ENCODE measurements at regions of chr4 and their contacts with region 1.

Region 1: DNA sequence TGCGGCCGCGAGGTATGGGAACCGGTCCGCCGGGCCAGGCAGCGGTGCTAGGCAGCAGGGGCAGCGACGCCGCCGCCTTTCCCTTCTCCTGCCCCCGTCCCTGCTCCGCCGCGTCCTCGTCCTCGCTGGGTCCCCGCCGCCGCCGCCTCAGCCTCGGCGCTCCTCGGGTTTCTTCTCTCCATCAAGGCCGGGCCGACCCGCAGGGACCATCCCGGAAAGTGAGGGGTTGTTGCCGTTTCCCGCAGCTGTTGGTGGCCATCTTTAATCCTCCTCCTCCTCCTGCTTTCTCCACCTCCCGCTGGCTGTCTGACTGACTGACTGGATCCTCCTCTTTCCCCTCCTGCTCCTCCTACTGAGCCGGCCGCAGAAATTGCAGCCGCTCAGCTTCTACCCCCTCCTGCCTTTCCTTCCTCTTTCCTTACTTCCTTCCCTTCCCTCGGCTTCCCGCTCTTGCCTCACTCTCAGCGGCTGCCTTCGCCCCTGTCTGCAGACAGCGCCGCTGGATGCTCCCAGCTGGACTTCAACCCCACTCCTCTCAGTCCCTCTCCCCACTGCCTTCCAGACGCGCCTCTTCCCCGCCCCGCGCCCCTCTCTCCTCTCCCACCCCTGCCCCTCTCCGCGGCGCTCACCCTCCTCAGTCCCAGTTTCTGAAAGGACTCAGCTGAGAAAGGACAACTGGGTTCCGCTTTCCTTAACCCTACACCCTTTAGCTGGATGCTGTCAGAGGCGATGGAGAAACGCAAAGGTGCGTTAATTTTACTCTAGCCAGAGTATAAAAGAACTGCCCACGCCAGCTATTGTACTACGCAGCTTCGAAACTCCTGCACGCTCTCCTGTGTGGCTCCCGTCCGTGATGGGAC is at the start of gene WDFY3:
- DNase-seq: peak; percentile 88 to 90 (median 90)
- ATAC-seq: peak; percentile 95 to 96 (median 96)
- H3K4me3 ChIP-seq: peak within 1 kb of the TSS; percentile 72 to 99 (median 85)
- H3K27ac ChIP-seq: peak within 1 kb of the TSS; percentile 88 to 97 (median 94)
- H3K4me1 ChIP-seq: peaks cover 0 to 41% (median 16%) of the 10 kb centered on the region in 12 donors
- H3K27me3 ChIP-seq: no peaks in the 10 kb centered on the region
- CTCF ChIP-seq: peak in 5 of 12 donors; percentile 10 to 46 (median 14)
- POLR2A ChIP-seq: peak in 1 of 2 donors; percentile 52
- total RNA-seq, gene WDFY3: 29.2 to 103 (median 54.1) TPM

Region 2: GRCh38 chr4:84582302-84583000 is 384.2 kb before region 1 on chr4:
- intact Hi-C with region 1: loop called in 4 of 10 experiments (anchors 5 to 10 kb)
- DNase-seq: peak; percentile 76 to 89 (median 84)
- ATAC-seq: peak; percentile 83 to 94 (median 92)
- H3K4me3 ChIP-seq: peak overlapping the region; percentile 50 to 83 (median 77)
- H3K27ac ChIP-seq: peak overlapping the region in 10 of 12 donors; percentile 23 to 83 (median 56)
- H3K4me1 ChIP-seq: peaks cover 0 to 19% (median 9%) of the 10 kb centered on the region in 12 donors
- H3K27me3 ChIP-seq: peaks cover 0 to 44% (median 13%) of the 10 kb centered on the region in 9 donors
- CTCF ChIP-seq: no peak
- POLR2A ChIP-seq: no peak

Region 3: GRCh38 chr4:84750253-84750959 is 216.2 kb before region 1 on chr4:
- intact Hi-C with region 1: loop called (anchors 1 to 5 kb)
- DNase-seq: no peak
- ATAC-seq: peak in 3 of 4 donors; percentile 59 to 67 (median 62)
- H3K4me3 ChIP-seq: no peak overlapping the region
- H3K27ac ChIP-seq: no peak overlapping the region
- H3K4me1 ChIP-seq: peaks cover 0 to 28% (median 0%) of the 10 kb centered on the region in 12 donors
- H3K27me3 ChIP-seq: no peaks in the 10 kb centered on the region
- CTCF ChIP-seq: peak; percentile 55 to 83 (median 70)
- POLR2A ChIP-seq: no peak

Region 4: DNA sequence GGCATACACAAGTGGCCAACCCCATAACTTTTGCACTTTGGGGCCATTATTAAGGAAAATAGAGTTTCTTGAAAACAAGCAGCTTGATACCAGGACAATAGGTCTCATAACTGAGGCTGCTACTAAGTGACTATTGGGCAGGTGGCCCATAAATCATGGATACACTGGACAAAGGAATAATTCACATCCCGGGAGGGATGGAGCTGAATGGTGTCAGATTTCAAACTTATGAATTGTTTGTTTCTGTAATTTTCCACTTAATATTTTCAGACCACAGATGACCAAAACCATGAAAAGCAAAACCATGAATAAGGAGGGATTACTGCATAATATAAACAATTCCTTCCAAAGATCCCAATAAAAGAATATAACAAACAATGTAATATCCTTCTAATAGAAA is 114.5 kb before region 1 on chr4:
- intact Hi-C with region 1: loop called in 6 of 10 experiments (anchors 5 to 10 kb)
- DNase-seq: no peak
- ATAC-seq: no peak
- H3K4me3 ChIP-seq: no peak overlapping the region
- H3K27ac ChIP-seq: no peak overlapping the region
- H3K4me1 ChIP-seq: peaks cover 0 to 39% (median 12%) of the 10 kb centered on the region in 12 donors
- H3K27me3 ChIP-seq: no peaks in the 10 kb centered on the region
- CTCF ChIP-seq: no peak
- POLR2A ChIP-seq: no peak

Region 5: DNA sequence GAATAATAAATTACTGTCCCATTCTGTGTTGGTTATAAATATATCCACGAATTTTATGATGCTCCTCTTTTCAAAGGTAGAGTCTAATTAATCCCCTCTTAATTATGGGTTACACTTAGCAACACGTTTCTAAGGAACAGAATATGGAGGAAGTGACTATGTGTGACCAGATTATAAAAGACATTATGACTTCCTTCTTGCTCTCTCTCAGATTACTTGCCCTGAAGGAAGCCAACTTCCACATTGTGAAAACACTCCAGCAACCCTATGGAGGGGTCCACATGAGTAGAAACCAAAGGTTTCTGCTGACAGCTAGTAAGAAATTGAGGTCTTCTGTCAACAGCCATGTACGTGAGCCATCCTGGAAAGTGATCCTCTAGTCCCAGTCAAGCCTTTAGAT is 59.5 kb before region 1 on chr4:
- intact Hi-C with region 1: loop called in 2 of 10 experiments (anchors 10 kb)
- DNase-seq: no peak
- ATAC-seq: peak in 1 of 4 donors; percentile 45
- H3K4me3 ChIP-seq: no peak overlapping the region
- H3K27ac ChIP-seq: peak overlapping the region in 1 of 12 donors; percentile 11
- H3K4me1 ChIP-seq: peaks cover 0 to 34% (median 3%) of the 10 kb centered on the region in 12 donors
- H3K27me3 ChIP-seq: no peaks in the 10 kb centered on the region
- CTCF ChIP-seq: no peak
- POLR2A ChIP-seq: no peak

Region 6: GRCh38 chr4:84915396-84915780 is 51.2 kb before region 1 on chr4:
- intact Hi-C with region 1: loop called in 1 of 10 experiments (anchors 10 kb)
- DNase-seq: no peak
- ATAC-seq: no peak
- H3K4me3 ChIP-seq: no peak overlapping the region
- H3K27ac ChIP-seq: peak overlapping the region in 1 of 12 donors; percentile 17
- H3K4me1 ChIP-seq: peaks cover 0 to 60% (median 33%) of the 10 kb centered on the region in 12 donors
- H3K27me3 ChIP-seq: no peaks in the 10 kb centered on the region
- CTCF ChIP-seq: no peak
- POLR2A ChIP-seq: no peak